Kidney (tissue), 22 donors: ENCODE measurements at regions of chr12 and their contacts with region 1.

Region 1: DNA sequence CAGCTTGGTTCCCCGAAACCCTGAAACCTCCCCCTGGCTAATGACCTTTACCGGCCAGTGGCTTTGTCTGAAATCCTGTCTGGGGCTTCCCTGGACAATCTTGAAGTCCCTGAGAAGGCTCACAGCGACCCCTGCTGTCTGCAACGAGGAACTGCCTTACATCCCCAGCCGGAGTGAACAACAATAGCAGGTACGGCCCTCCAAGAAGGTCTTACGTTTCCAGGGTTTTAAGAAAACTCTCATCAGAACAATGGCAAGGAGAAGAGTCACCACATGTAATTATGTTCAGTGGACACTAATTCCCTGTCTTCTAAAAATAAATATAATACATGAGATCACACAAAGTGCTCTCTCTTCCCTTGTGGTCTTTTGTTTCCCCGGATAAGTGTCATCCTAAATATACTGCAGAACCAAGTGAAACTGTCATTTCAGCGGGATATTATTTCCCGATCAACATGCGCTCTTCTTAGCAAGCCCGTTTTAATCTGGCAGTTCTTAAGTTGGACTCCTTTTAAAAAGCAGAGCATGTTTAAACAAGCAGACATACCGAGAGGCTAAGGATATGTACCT is 53.3 kb downstream of the RBM19 start:
- DNase-seq: peak in 4 of 5 donors; percentile 82 to 85 (median 82)
- H3K4me3 ChIP-seq: no peak overlapping the region
- H3K27ac ChIP-seq: no peak overlapping the region
- H3K4me1 ChIP-seq: no peaks in the 10 kb centered on the region
- H3K27me3 ChIP-seq: no peaks in the 10 kb centered on the region
- CTCF ChIP-seq: peak; percentile 92

Region 2: GRCh38 chr12:113462117-113462774 is 450.6 kb before region 1 on chr12:
- intact Hi-C with region 1: loop called (anchors 10 kb)
- DNase-seq: peak; percentile 84 to 88 (median 86)
- H3K4me3 ChIP-seq: no peak overlapping the region
- H3K27ac ChIP-seq: no peak overlapping the region
- H3K4me1 ChIP-seq: peaks cover 0 to 11% (median 0%) of the 10 kb centered on the region in 3 donors
- H3K27me3 ChIP-seq: peaks cover 33% of the 10 kb centered on the region
- CTCF ChIP-seq: peak; percentile 59

Region 3: DNA sequence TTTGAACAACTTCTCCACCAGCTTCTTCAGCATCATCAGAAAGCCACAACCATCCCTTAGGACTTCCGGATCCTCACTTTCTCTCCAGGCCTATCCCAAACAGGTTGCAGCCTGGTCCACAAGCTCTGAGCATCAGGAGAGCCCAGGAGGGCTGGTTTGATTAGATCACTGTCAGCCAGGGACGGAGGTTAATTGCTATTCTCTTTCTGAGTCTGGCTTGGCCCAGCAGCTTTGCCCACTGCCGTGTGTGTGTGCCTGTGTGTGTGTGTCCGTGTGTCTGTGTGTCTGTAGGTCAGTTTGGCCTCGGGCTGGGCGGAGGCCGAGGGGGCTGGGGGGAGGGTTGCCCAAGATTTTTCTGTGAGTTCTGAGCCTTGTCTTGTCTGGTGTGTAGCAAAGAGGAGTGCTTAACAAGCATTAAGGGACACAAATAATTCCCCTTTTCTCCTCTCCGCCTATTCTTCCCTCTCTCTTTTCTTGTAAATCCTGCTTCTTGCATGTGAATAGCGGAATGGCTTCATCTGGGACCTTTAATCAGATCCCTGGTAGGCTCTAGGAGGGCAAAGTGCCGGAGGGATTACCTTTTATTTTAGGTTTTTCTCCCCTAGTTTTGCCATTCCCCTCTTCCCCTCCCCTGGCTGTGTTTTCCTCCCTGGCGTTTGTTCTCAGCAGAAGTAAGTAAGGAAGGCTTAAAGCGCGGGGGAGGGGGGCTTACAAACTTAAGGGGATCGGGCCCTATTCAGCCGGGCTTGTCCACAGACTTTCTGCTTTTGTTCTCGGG is 303.0 kb before region 1 on chr12:
- intact Hi-C with region 1: no loop called
- DNase-seq: no peak
- H3K4me3 ChIP-seq: no peak overlapping the region
- H3K27ac ChIP-seq: no peak overlapping the region
- H3K4me1 ChIP-seq: no peaks in the 10 kb centered on the region
- H3K27me3 ChIP-seq: peaks cover 22% of the 10 kb centered on the region
- CTCF ChIP-seq: no peak

Region 4: GRCh38 chr12:113712481-113712880 is 200.4 kb before region 1 on chr12:
- intact Hi-C with region 1: no loop called
- DNase-seq: no peak
- H3K4me3 ChIP-seq: no peak overlapping the region
- H3K27ac ChIP-seq: no peak overlapping the region
- H3K4me1 ChIP-seq: no peaks in the 10 kb centered on the region
- H3K27me3 ChIP-seq: no peaks in the 10 kb centered on the region
- CTCF ChIP-seq: no peak

Region 5: DNA sequence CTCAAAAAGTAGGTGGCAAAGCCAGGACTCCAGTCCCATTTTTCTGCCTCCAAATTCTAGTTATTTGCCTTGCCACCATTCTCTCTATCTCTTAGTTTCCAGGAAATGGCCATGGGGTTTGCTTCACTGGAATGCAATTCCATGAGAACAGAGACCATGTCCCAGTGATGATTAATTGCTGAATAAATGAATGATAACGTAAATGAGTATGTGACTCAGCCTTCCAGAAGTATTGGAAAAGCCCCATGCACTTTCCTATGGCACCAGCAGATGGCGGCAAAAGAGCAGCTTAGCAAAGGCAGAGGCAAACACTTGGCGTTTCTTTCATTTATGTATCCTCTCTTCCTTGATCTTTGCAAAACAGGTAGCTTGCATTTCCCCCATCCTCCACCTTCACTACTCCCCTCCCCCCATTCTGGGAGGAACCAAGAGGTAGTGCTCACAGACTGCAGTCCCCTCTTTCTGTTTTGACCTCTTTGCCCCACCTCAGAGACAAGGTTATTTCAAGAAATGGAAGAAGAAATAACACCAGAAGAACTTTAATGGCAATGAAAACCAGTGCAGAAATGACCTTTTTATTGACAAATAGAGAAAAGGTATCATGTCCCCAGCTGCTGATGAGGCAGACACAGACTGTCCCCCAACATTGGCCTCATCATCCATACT is 749.8 kb after region 1 on chr12:
- intact Hi-C with region 1: no loop called
- DNase-seq: peak; percentile 78 to 86 (median 84)
- H3K4me3 ChIP-seq: no peak overlapping the region
- H3K27ac ChIP-seq: no peak overlapping the region
- H3K4me1 ChIP-seq: peaks cover 0 to 3% (median 1%) of the 10 kb centered on the region in 3 donors
- H3K27me3 ChIP-seq: peaks cover 22% of the 10 kb centered on the region
- CTCF ChIP-seq: peak; percentile 96